ENCODE measurements at regions of chr11 and their contacts with region 1.

Region 1: GRCh38 chr11:90222459-90223247 is at the start of gene CHORDC1:
- H3K4me3 ChIP-seq: peak within 1 kb of the TSS; percentile 92
- H3K27ac ChIP-seq: peak within 1 kb of the TSS; percentile 62; the same call in 1 of the 2 replicates
- H3K4me1 ChIP-seq: no peaks in the 10 kb centered on the region
- CTCF ChIP-seq: 0 out of 2 replicates have a peak, but pooled peaks have one; percentile 8

Region 2: DNA sequence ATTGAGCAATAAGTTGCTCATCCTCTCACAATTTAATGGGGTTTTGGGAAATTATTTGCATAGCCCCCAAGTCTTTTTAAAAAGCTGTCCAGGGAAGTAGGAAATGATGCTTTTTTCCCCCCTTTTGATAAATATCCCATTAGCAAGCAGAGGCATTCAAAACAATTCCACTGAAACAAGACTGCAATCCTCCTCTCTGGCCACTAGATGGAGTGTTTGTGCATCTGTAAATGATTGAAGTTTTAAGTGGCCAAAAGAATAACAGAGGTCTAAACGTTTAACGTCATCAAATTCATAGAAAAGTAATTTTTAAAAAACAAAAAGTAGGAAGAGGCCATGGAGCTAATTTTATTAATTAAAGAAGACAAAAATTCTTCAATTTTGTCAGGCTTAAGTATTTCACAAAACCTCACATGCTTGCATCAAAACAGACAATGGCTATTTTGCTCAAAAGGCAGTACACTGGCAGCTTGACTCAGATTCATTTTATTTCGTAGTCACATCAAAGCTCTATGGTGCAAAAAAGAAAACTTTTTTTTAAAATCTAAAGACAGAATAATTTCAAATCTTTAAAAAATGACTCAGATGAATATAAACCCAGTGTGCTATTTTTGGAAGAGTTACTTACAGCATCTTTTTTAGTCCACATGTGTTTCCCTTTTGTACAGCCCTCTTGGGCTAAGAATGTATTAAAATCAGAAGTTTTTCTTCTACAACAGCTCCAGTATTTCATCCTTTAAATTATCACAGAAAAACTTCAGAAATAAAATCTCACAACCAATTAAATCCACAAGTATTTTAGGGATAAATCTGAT is 17.6 kb before region 1 on chr11:
- CTCF ChIA-PET with region 1: interaction called, 26 read pairs
- POLR2A ChIA-PET with region 1: no interaction called
- H3K4me3 ChIP-seq: no peak overlapping the region
- H3K27ac ChIP-seq: no peak overlapping the region
- H3K4me1 ChIP-seq: no peaks in the 10 kb centered on the region
- CTCF ChIP-seq: no peak

Region 3: GRCh38 chr11:90256404-90257157 is 33.9 kb after region 1 on chr11:
- CTCF ChIA-PET with region 1: no interaction called
- POLR2A ChIA-PET with region 1: no interaction called
- H3K4me3 ChIP-seq: no peak overlapping the region
- H3K27ac ChIP-seq: no peak overlapping the region
- H3K4me1 ChIP-seq: no peaks in the 10 kb centered on the region
- CTCF ChIP-seq: no peak